Endothelial cell of umbilical vein (primary cell): ENCODE measurements at regions of chr15 and their contacts with region 1.

Region 1: GRCh38 chr15:68352401-68353062 is 75.0 kb downstream of the FEM1B start:
- DNase-seq: peak; percentile 98
- H3K4me3 ChIP-seq: no peak overlapping the region
- H3K27ac ChIP-seq: peak overlapping the region; percentile 97
- H3K4me1 ChIP-seq: peaks cover 20% of the 10 kb centered on the region
- H3K27me3 ChIP-seq: no peaks in the 10 kb centered on the region
- CTCF ChIP-seq: no peak
- POLR2A ChIP-seq: no peak

Region 2: GRCh38 chr15:68229386-68230156 is 123.0 kb before region 1 on chr15 and contains the start of gene CLN6:
- CTCF ChIA-PET with region 1: no interaction called
- POLR2A ChIA-PET with region 1: no interaction called
- dilution Hi-C with region 1: no loop called
- intact Hi-C with region 1: no loop called
- DNase-seq: peak; percentile 80
- H3K4me3 ChIP-seq: peak within 1 kb of the TSS; percentile 65 to 85 (median 77)
- H3K27ac ChIP-seq: peak within 1 kb of the TSS; percentile 71
- H3K4me1 ChIP-seq: peaks cover 15% of the 10 kb centered on the region
- H3K27me3 ChIP-seq: no peaks in the 10 kb centered on the region
- CTCF ChIP-seq: no peak
- POLR2A ChIP-seq: peak; percentile 67
- total RNA-seq, gene CLN6: 48.0 and 53.9 TPM in 2 replicates

Region 3: DNA sequence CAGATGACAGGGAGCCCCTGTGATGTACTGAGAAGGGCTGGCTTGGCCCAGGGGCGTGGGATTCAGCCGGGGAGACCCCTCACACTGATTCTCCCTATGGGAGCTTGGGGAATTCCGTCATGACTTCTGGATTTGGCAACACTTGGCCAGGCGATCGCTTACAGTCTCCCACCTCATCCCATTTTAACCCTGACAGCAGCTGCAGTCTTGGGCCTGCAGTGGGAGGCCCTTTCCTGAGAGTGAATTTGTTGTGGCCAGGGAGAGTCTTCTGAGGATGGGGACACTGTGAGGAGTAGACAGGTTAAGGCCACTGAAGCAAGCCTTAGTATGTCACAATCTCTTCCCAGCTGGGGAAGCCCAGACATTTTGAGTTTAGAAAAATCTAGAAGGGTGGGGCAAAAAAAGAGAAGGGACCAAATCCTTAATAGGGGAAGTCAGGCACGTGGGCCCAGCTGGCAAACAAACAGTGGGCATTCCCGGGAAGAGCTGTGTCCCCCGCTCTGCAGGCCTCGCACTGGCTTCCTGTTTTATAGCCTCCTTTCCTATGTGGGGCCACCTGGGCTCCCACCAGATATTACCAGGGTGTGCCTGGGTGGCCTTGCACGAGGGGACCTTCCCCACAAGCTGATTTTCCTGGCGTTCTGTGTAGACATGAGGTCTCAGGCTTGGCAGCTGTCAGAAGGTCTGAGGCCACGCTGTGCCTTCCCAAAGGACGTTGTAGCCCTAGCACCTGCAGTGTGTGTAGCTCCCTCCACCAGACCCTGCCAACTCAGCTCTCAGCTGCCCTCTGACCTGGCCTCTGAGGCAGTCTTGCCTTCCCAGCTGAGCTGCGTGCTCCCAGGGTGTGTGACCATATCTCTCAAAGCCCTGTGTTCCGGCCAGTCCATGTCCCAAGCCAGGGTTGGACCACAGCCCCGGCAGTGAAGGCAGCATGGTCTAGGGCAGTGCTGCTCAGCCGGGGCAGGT is 10.5 kb before region 1 on chr15:
- CTCF ChIA-PET with region 1: no interaction called
- POLR2A ChIA-PET with region 1: no interaction called
- dilution Hi-C with region 1: no loop called
- intact Hi-C with region 1: loop called (anchors 1 kb)
- DNase-seq: no peak
- H3K4me3 ChIP-seq: no peak overlapping the region
- H3K27ac ChIP-seq: no peak overlapping the region
- H3K4me1 ChIP-seq: peaks cover 12% of the 10 kb centered on the region
- H3K27me3 ChIP-seq: no peaks in the 10 kb centered on the region
- CTCF ChIP-seq: no peak
- POLR2A ChIP-seq: no peak

Region 4: GRCh38 chr15:68365140-68365745 is 12.7 kb after region 1 on chr15:
- CTCF ChIA-PET with region 1: interaction called, 10 read pairs
- POLR2A ChIA-PET with region 1: no interaction called
- dilution Hi-C with region 1: no loop called
- intact Hi-C with region 1: loop called (anchors 1 kb)
- DNase-seq: peak; percentile 57
- H3K4me3 ChIP-seq: no peak overlapping the region
- H3K27ac ChIP-seq: peak overlapping the region; percentile 28
- H3K4me1 ChIP-seq: peaks cover 45% of the 10 kb centered on the region
- H3K27me3 ChIP-seq: no peaks in the 10 kb centered on the region
- CTCF ChIP-seq: no peak
- POLR2A ChIP-seq: no peak

Region 5: GRCh38 chr15:68372291-68372811 is 19.8 kb after region 1 on chr15:
- CTCF ChIA-PET with region 1: interaction called, 10 read pairs
- POLR2A ChIA-PET with region 1: no interaction called
- dilution Hi-C with region 1: no loop called
- intact Hi-C with region 1: loop called (anchors 1 kb)
- DNase-seq: peak; percentile 53
- H3K4me3 ChIP-seq: no peak overlapping the region
- H3K27ac ChIP-seq: no peak overlapping the region
- H3K4me1 ChIP-seq: peaks cover 15% of the 10 kb centered on the region
- H3K27me3 ChIP-seq: no peaks in the 10 kb centered on the region
- CTCF ChIP-seq: peak; percentile 41 to 78
- POLR2A ChIP-seq: no peak

Region 6: GRCh38 chr15:68383161-68384074 is 30.9 kb after region 1 on chr15:
- CTCF ChIA-PET with region 1: interaction called, 3 read pairs
- POLR2A ChIA-PET with region 1: no interaction called
- dilution Hi-C with region 1: no loop called
- intact Hi-C with region 1: loop called (anchors 1 kb)
- DNase-seq: peak; percentile 69
- H3K4me3 ChIP-seq: no peak overlapping the region
- H3K27ac ChIP-seq: peak overlapping the region; percentile 50
- H3K4me1 ChIP-seq: peaks cover 37% of the 10 kb centered on the region
- H3K27me3 ChIP-seq: no peaks in the 10 kb centered on the region
- CTCF ChIP-seq: peak; percentile 61 to 69
- POLR2A ChIP-seq: no peak

Region 7: DNA sequence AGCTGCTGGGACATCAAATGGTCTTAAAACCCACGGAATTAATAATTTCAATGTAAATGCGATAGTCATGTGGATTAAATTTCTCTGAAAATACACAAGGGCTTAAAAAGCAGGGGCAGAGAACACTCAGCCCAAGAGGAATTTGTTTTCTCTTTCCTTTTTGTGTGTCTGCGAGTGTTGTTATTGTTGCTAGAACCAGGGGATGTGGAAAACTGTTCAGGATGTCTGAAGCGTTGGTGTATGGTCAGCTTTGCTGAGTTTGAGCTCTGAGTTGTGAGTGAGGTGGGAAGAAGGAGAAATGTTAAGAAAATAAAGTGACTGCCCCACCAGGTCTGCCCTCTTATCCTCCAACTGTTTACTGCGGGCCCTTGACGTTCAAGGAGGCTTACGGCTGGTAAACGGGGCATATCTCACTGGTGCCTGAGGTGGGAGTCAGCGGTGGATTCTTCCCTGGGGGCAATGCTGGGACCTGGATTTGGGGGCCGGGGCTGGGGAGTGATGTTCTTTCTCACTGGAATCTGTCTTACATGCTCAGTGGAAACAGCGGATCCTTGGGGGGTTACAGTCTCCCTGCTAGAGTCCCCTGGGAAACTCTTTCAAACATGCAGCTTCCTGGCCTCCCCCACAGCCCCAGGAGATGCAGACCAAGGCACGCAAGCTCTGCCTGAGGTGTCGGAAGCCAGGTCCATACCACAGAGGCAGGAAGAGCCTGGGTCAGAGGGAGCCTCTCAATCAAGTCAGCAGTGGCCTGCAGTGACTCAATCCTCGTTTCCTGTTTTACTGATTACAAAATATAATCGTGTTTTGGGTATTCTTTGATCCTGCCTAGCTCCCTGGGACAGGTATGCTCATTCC is 37.6 kb after region 1 on chr15:
- CTCF ChIA-PET with region 1: interaction called, 3 read pairs
- POLR2A ChIA-PET with region 1: no interaction called
- dilution Hi-C with region 1: no loop called
- intact Hi-C with region 1: loop called (anchors 1 kb)
- DNase-seq: peak; percentile 80
- H3K4me3 ChIP-seq: no peak overlapping the region
- H3K27ac ChIP-seq: peak overlapping the region; percentile 78
- H3K4me1 ChIP-seq: peaks cover 27% of the 10 kb centered on the region
- H3K27me3 ChIP-seq: no peaks in the 10 kb centered on the region
- CTCF ChIP-seq: no peak
- POLR2A ChIP-seq: peak; percentile 47